CD4-positive, alpha-beta memory T cell (primary cell): ENCODE measurements at regions of chr11 and their contacts with region 1.

Region 1: GRCh38 chr11:65859200-65859811 is 927 bp upstream of the MUS81 start:
- DNase-seq: peak; percentile 89 to 98 (median 92)
- H3K4me3 ChIP-seq: peak overlapping the region; percentile 55 to 81
- H3K4me3 Mint-ChIP-seq: peak overlapping the region; percentile 93 to 99 (median 96)
- H3K27ac ChIP-seq: peak overlapping the region; percentile 85
- H3K27ac Mint-ChIP-seq: peak overlapping the region; percentile 92 to 99 (median 97)
- H3K4me1 ChIP-seq: peaks cover 58% of the 10 kb centered on the region
- H3K4me1 Mint-ChIP-seq: peaks cover 32 to 64% (median 48%) of the 10 kb centered on the region in 4 donors
- H3K27me3 ChIP-seq: no peaks in the 10 kb centered on the region
- H3K27me3 Mint-ChIP-seq: no peaks in the 10 kb centered on the region

Region 2: DNA sequence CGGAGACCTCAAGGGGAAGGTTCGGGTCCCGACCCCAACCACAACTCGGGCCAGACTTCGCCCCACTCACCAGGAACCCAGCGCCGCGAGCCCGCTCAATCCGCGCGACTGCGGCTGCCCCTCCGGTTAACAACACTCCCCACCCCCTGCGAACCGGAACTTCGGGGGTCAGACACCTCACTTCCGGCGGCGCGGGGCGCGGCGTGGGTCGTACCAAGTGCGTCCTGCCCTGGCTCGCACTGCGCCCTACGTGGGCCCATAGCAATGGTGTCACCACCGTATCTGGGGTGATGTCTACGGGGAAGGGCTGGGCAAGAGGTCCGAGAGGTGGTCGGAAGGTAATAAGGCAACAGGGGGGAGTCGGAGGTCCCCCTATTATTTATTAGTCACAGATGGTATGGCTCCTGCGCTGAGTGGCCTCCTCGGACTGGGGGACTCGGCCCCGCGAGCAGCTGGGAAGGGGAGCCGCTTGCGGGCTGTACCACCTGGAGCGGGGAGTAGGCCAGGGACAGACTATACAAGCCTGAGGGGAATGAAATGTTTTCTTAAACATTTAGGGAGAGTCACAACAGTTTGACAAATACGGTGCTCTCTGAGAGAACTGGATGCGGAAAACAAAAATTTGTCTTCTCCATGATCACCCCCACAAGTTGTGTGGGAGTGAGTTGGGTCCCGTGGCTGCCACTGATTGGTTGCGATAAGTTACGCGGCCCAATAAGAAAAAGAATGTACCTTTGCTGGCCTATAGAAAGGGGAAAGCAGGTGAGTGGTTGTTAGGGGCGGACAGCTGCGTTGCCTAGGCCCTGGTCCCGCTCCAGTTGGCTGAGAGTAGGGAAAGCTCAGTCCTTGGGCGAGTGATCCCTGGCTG is 724.7 kb before region 1 on chr11 and contains the start of gene SYVN1:
- CTCF ChIA-PET with region 1: no interaction called
- POLR2A ChIA-PET with region 1: no interaction called
- intact Hi-C with region 1: loop called (anchors 10 kb)
- DNase-seq: peak; percentile 92 to 95 (median 94)
- H3K4me3 ChIP-seq: peak within 1 kb of the TSS; percentile 68 to 99
- H3K4me3 Mint-ChIP-seq: peak within 1 kb of the TSS; percentile 97 to 100 (median 98)
- H3K27ac ChIP-seq: peak within 1 kb of the TSS; percentile 99
- H3K27ac Mint-ChIP-seq: peak within 1 kb of the TSS; percentile 99 to 100 (median 100)
- H3K4me1 ChIP-seq: peaks cover 30% of the 10 kb centered on the region
- H3K4me1 Mint-ChIP-seq: peaks cover 23 to 48% (median 33%) of the 10 kb centered on the region in 4 donors
- H3K27me3 ChIP-seq: no peaks in the 10 kb centered on the region
- H3K27me3 Mint-ChIP-seq: no peaks in the 10 kb centered on the region
- total RNA-seq, gene SYVN1: 74.0 to 76.5 TPM

Region 3: DNA sequence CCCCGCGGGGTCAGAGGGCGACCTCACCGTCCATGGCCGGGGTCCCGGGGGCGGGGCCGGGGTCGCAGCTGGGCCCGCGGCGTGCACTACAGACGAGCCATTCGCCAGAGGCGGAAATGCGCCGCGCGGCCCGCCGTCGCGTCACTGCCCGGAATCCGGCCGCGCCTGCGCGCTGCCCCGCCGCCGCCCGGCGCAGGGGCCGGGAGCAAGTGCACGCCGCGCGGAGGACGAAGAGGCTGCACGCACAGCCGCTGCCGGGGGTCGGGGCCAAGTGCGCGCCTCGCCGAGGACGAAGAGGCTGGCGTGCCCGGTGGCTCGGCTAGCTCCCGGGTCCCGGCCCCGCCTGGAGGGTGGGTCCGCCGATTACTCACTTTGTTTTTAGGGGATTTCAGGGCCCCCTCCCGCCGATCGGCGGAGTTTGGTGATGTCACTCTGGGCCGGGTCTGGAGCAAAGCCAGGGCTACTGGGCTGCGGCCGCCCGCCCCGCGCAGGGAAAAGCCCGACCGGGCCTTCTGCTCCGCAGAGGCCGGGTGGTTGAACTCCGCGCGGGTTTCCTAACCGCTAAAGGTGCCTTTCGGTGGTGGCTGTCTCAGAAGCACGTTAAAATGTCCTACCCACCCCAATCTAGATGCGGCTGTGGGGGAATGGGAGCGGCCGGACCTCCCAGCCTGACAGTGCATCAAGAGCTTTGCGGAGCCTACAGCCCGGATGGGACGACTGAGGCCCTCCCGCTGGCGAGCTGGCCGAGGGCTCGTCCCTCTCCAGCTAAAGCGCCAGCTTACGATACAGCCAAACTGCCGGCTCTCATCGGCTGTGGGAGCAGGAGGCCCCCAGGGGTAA is 196.3 kb before region 1 on chr11 and contains the start of gene RELA:
- CTCF ChIA-PET with region 1: no interaction called
- POLR2A ChIA-PET with region 1: interaction called, 20 read pairs
- intact Hi-C with region 1: loop called (anchors 5 kb)
- DNase-seq: peak; percentile 87 to 95 (median 91)
- H3K4me3 ChIP-seq: peak within 1 kb of the TSS; percentile 96 to 97
- H3K4me3 Mint-ChIP-seq: peak within 1 kb of the TSS; percentile 89 to 95 (median 90)
- H3K27ac ChIP-seq: peak within 1 kb of the TSS; percentile 98
- H3K27ac Mint-ChIP-seq: peak within 1 kb of the TSS; percentile 96 to 98 (median 96)
- H3K4me1 ChIP-seq: peaks cover 38% of the 10 kb centered on the region
- H3K4me1 Mint-ChIP-seq: peaks cover 20 to 45% (median 33%) of the 10 kb centered on the region in 4 donors
- H3K27me3 ChIP-seq: no peaks in the 10 kb centered on the region
- H3K27me3 Mint-ChIP-seq: no peaks in the 10 kb centered on the region
- total RNA-seq, gene RELA: 170 to 173 TPM

Region 4: GRCh38 chr11:65873318-65874156 is 14.2 kb after region 1 on chr11:
- CTCF ChIA-PET with region 1: interaction called, 30 read pairs
- POLR2A ChIA-PET with region 1: interaction called, 435 read pairs
- intact Hi-C with region 1: loop called (anchors 2 kb)
- DNase-seq: peak; percentile 94 to 99 (median 96)
- H3K4me3 ChIP-seq: peak overlapping the region; percentile 57 to 69
- H3K4me3 Mint-ChIP-seq: peak overlapping the region; percentile 71 to 95 (median 89)
- H3K27ac ChIP-seq: peak overlapping the region; percentile 77
- H3K27ac Mint-ChIP-seq: peak overlapping the region; percentile 85 to 96 (median 94)
- H3K4me1 ChIP-seq: peaks cover 20% of the 10 kb centered on the region
- H3K4me1 Mint-ChIP-seq: peaks cover 7 to 45% (median 20%) of the 10 kb centered on the region in 4 donors
- H3K27me3 ChIP-seq: no peaks in the 10 kb centered on the region
- H3K27me3 Mint-ChIP-seq: no peaks in the 10 kb centered on the region

Region 5: DNA sequence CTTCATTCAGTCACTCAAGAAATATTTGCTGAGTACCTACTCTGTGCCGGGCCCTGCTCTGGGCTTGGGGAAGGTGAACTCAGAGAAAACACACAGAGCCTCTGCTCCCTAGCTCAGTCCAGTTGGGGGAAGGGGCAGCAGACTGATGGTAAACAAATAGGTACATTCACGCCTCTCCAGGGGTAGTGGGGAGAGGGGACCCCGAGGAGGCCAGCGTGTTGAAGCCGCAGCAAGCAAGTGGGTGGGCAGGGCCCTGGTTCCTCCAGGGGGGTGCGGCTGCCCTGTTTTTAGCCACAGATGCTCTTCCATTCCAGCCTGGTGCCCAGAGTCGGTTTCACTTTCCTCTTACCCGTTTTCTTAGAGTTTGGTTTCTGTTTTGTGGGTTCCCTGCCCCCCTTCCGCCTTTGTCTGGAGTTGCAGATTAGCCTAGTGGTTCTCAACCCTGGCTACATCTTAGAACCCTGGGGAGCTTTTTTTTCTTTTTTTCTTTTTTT is 68.6 kb after region 1 on chr11:
- CTCF ChIA-PET with region 1: interaction called, 4 read pairs
- POLR2A ChIA-PET with region 1: interaction called, 14 read pairs
- intact Hi-C with region 1: no loop called
- DNase-seq: peak; percentile 77 to 91 (median 79)
- H3K4me3 ChIP-seq: peak overlapping the region; percentile 30 to 66
- H3K4me3 Mint-ChIP-seq: peak overlapping the region; percentile 73 to 90 (median 82)
- H3K27ac ChIP-seq: peak overlapping the region; percentile 72
- H3K27ac Mint-ChIP-seq: peak overlapping the region; percentile 84 to 98 (median 95)
- H3K4me1 ChIP-seq: peaks cover 24% of the 10 kb centered on the region
- H3K4me1 Mint-ChIP-seq: peaks cover 18 to 34% (median 25%) of the 10 kb centered on the region in 4 donors
- H3K27me3 ChIP-seq: no peaks in the 10 kb centered on the region
- H3K27me3 Mint-ChIP-seq: no peaks in the 10 kb centered on the region

Region 6: GRCh38 chr11:65941720-65942310 is 82.5 kb after region 1 on chr11:
- CTCF ChIA-PET with region 1: no interaction called
- POLR2A ChIA-PET with region 1: no interaction called
- intact Hi-C with region 1: no loop called
- DNase-seq: no peak
- H3K4me3 ChIP-seq: no peak overlapping the region
- H3K4me3 Mint-ChIP-seq: no peak overlapping the region
- H3K27ac ChIP-seq: no peak overlapping the region
- H3K27ac Mint-ChIP-seq: no peak overlapping the region
- H3K4me1 ChIP-seq: no peaks in the 10 kb centered on the region
- H3K4me1 Mint-ChIP-seq: no peaks in the 10 kb centered on the region
- H3K27me3 ChIP-seq: no peaks in the 10 kb centered on the region
- H3K27me3 Mint-ChIP-seq: no peaks in the 10 kb centered on the region

Region 7: DNA sequence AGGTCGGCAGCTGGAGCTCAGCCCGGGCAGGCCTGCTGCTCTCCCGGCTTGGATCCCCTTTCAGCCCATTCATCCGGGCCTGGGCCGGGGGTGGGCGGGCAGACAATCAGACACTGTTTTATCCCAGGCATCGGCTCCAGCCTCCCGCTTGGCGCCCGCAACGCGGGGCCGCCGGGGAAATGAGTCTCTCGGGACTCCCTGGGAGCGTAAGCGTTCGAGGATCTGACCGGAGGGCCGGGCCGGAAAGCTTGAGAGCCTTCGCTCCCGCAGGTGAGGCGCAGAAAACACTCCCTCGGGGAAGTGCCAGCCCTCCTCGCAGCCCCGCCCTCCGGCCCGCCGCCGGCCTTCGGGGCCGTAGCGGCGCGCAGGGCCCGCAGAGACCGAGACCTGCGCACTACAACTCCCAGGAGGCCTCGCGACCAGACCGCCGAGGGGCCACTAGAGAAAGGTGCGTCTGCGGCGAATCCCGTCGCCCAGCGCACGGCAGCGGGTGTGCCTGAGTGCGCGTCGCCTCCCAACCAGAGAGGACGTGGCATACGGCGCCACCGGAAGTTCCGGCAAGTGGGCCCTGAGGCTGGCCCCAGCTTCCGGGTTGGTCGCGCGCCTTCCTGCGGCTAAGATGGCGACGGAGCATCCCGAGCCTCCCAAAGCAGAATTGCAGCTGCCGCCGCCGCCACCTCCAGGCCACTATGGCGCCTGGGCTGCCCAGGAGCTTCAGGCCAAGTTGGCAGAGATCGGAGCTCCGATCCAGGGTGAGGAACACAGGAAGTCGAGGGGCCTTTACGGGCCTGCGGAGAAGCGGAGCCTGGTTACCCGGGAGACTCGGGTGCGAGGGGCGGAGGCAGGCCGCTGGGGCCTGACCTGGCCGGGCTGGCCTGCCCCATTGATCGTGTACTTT is 192.7 kb after region 1 on chr11 and contains the start of gene SF3B2:
- CTCF ChIA-PET with region 1: interaction called, 3 read pairs
- POLR2A ChIA-PET with region 1: interaction called, 16 read pairs
- intact Hi-C with region 1: no loop called
- DNase-seq: peak; percentile 93 to 96 (median 96)
- H3K4me3 ChIP-seq: peak within 1 kb of the TSS; percentile 91 to 99
- H3K4me3 Mint-ChIP-seq: peak within 1 kb of the TSS; percentile 99 to 100 (median 100)
- H3K27ac ChIP-seq: peak within 1 kb of the TSS; percentile 81
- H3K27ac Mint-ChIP-seq: peak within 1 kb of the TSS; percentile 98 to 100 (median 99)
- H3K4me1 ChIP-seq: peaks cover 23% of the 10 kb centered on the region
- H3K4me1 Mint-ChIP-seq: peaks cover 12 to 40% (median 25%) of the 10 kb centered on the region in 4 donors
- H3K27me3 ChIP-seq: no peaks in the 10 kb centered on the region
- H3K27me3 Mint-ChIP-seq: peaks cover 0 to 1% of the 10 kb centered on the region in 2 donors
- total RNA-seq, gene SF3B2: 238 to 240 TPM

Region 8: GRCh38 chr11:66228521-66228920 is 369.2 kb after region 1 on chr11:
- CTCF ChIA-PET with region 1: no interaction called
- POLR2A ChIA-PET with region 1: no interaction called
- intact Hi-C with region 1: no loop called
- DNase-seq: no peak
- H3K4me3 ChIP-seq: no peak overlapping the region
- H3K4me3 Mint-ChIP-seq: no peak overlapping the region
- H3K27ac ChIP-seq: no peak overlapping the region
- H3K27ac Mint-ChIP-seq: peak overlapping the region in 1 of 7 donors; percentile 19
- H3K4me1 ChIP-seq: no peaks in the 10 kb centered on the region
- H3K4me1 Mint-ChIP-seq: peaks cover 0 to 3% (median under 1%) of the 10 kb centered on the region in 4 donors
- H3K27me3 ChIP-seq: no peaks in the 10 kb centered on the region
- H3K27me3 Mint-ChIP-seq: no peaks in the 10 kb centered on the region